MCF 10A (cell line): ENCODE measurements at regions of chrX and their contacts with region 1.

Region 1: GRCh38 chrX:73855546-73855945 is 292.5 kb downstream of the CHIC1 start:
- DNase-seq: peak; percentile 82
- H3K4me3 Mint-ChIP-seq: no peak overlapping the region
- H3K27ac Mint-ChIP-seq: no peak overlapping the region
- H3K4me1 Mint-ChIP-seq: no peaks in the 10 kb centered on the region
- H3K27me3 Mint-ChIP-seq: peaks cover 12% of the 10 kb centered on the region
- CTCF ChIP-seq: peak; percentile 64

Region 2: GRCh38 chrX:73021361-73022092 is 834.0 kb before region 1 on chrX:
- CTCF ChIA-PET with region 1: no interaction called
- POLR2A ChIA-PET with region 1: no interaction called
- intact Hi-C with region 1: no loop called
- DNase-seq: no peak
- H3K4me3 Mint-ChIP-seq: no peak overlapping the region
- H3K27ac Mint-ChIP-seq: no peak overlapping the region
- H3K4me1 Mint-ChIP-seq: no peaks in the 10 kb centered on the region
- H3K27me3 Mint-ChIP-seq: peaks cover 10% of the 10 kb centered on the region
- CTCF ChIP-seq: no peak

Region 3: GRCh38 chrX:74015379-74016019 is 160.0 kb after region 1 on chrX:
- CTCF ChIA-PET with region 1: interaction called, 27 read pairs
- POLR2A ChIA-PET with region 1: interaction called, 4 read pairs
- intact Hi-C with region 1: loop called (anchors 1 kb)
- DNase-seq: peak; percentile 86
- H3K4me3 Mint-ChIP-seq: no peak overlapping the region
- H3K27ac Mint-ChIP-seq: no peak overlapping the region
- H3K4me1 Mint-ChIP-seq: no peaks in the 10 kb centered on the region
- H3K27me3 Mint-ChIP-seq: no peaks in the 10 kb centered on the region
- CTCF ChIP-seq: peak; percentile 78

Region 4: GRCh38 chrX:74343343-74344279 is 488.1 kb after region 1 on chrX:
- CTCF ChIA-PET with region 1: interaction called, 6 read pairs
- POLR2A ChIA-PET with region 1: no interaction called
- intact Hi-C with region 1: loop called (anchors 1 kb)
- DNase-seq: peak; percentile 96
- H3K4me3 Mint-ChIP-seq: no peak overlapping the region
- H3K27ac Mint-ChIP-seq: no peak overlapping the region
- H3K4me1 Mint-ChIP-seq: peaks cover 7% of the 10 kb centered on the region
- H3K27me3 Mint-ChIP-seq: peaks cover 10% of the 10 kb centered on the region
- CTCF ChIP-seq: peak; percentile 53

Region 5: DNA sequence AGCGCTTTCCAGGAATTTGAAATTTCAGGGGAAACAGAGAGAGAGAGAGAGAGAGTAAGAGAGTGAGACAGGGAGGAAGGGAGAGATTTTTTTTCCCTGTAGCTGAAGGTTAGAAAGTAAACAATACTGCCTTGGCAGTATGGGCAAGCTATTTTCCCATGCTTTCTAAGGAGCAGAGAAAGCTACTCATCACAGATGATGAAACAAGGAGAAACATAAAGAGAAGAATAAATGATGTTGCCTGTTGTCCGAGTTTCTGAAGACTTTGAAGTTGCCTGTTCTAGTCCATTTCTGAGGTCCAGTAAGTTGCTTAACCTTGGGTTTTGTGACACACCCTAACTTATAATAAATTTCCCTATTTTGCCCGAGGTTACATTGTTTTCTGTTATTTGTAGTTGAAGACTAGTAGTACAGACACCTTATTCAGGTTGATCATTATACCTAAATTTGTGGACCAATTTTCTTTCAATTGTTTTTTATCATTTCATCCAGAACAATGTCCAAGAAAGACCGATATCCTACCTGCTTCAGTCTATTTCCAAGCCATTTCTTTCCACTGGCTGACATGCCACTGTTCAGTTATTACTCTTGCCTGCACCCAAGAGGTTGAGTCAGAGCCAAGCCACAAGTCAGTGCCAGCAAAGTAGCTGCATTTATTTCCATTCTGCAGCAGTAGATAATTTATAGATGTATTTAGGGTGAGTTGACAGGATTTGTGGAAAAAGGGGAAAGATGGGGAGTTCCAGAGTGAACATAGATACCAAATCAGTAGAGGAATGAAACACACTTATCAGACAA is 516.1 kb after region 1 on chrX:
- CTCF ChIA-PET with region 1: no interaction called
- POLR2A ChIA-PET with region 1: no interaction called
- intact Hi-C with region 1: no loop called
- DNase-seq: peak; percentile 8
- H3K4me3 Mint-ChIP-seq: no peak overlapping the region
- H3K27ac Mint-ChIP-seq: peak overlapping the region; percentile 23
- H3K4me1 Mint-ChIP-seq: peaks cover 15% of the 10 kb centered on the region
- H3K27me3 Mint-ChIP-seq: peaks cover 91% of the 10 kb centered on the region
- CTCF ChIP-seq: no peak

Region 6: DNA sequence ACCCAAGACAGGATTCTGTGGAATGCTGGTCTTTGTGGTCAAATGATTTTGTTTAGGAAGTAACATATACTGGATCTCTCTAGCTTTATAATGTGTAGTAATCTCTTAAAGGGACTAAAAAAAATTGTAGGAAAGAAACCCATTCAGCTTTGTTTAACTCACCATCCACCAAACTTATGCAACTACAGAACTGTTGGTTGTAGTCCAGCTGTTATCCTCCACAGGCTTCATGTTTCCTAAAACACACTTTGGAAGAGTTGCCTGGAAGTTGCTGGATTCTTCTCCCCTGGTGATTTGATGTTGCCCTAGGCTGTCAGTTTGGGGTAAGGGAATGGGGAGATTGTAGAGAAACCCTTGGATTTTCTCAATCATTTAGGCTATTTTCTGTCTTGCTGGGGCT is 669.6 kb after region 1 on chrX:
- CTCF ChIA-PET with region 1: no interaction called
- POLR2A ChIA-PET with region 1: no interaction called
- intact Hi-C with region 1: no loop called
- DNase-seq: no peak
- H3K4me3 Mint-ChIP-seq: no peak overlapping the region
- H3K27ac Mint-ChIP-seq: no peak overlapping the region
- H3K4me1 Mint-ChIP-seq: no peaks in the 10 kb centered on the region
- H3K27me3 Mint-ChIP-seq: peaks cover 4% of the 10 kb centered on the region
- CTCF ChIP-seq: no peak

Region 7: DNA sequence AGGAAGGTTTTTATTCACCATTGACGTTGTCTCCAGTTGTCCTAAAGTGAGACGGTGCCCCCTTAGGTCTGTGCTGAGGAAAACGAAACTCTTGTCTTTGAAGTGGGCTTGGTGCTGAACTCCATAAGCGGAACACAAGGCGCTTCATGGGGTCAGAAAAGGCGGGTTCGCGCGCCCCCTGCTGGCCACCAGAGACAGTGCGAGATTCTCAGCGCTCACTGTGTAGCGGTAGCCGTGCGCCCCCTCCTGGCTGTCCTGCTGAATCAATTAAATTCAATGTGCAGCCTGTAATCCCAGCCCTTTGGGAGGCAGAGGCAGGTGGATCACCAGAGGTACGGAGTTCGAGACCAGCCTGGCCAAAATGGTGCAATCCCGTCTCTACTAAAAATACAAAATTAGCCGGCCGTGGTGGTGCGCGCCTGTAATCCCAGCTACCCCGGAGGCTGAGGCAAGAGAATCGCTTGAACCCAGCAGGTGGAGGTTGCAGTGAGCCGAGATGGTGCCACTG is 694.8 kb after region 1 on chrX:
- CTCF ChIA-PET with region 1: no interaction called
- POLR2A ChIA-PET with region 1: no interaction called
- intact Hi-C with region 1: loop called (anchors 1 kb)
- DNase-seq: peak; percentile 76
- H3K4me3 Mint-ChIP-seq: no peak overlapping the region
- H3K27ac Mint-ChIP-seq: no peak overlapping the region
- H3K4me1 Mint-ChIP-seq: no peaks in the 10 kb centered on the region
- H3K27me3 Mint-ChIP-seq: peaks cover 2% of the 10 kb centered on the region
- CTCF ChIP-seq: peak; percentile 98